SK-N-SH (cell line): ENCODE measurements at regions of chr20 and their contacts with region 1.

Region 1: DNA sequence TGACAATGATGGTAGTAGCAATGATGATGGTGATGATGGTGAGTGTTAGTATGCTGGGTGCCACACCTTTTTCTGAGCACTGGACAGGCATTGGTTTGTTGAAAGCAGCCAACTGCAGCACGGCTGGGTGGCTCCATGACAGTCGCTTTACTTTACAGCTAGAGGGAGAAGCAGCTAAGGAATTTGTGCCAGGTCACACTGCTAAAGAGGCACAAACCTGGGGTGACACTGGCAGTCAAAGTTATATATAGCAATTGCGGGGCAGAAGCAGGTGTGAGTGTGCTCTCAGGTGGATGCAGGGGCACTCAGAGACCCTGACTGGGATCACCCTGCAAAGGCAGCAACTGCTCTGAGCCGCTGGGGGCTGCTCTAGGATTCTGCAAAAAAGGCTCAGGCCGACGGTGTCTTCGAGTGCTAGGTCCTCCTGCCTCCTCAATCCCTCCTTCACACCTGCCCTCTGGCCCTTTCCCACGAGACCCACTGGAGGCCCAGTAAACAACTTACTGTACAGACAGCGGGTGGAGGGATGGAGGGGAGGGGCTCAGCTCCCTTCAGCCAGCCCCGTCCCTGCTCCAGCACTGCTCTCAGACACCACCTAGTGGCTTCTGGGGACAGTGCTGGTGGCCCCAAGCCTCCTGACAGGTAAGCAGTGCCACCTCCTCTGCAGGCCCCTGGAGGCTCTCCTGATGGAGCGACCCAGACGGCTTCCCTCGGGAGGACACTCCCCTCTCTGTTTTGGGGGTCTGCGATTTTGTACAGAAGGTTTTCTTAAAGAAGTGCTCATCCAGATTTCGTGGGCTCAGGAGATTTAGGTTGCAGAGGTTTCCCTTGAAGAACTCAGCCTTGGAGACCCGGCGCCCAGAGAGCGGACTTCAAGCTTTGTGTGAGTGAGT is 4.4 kb upstream of the RPS21 start:
- DNase-seq: peak; percentile 90
- H3K4me3 ChIP-seq: no peak overlapping the region; a peak in 1 of 4 replicates
- H3K27ac ChIP-seq: no peak overlapping the region
- H3K4me1 ChIP-seq: peaks cover 7 to 9% of the 10 kb centered on the region in 2 experiments; a peak in 2 of 4 replicates
- H3K27me3 ChIP-seq: no peaks in the 10 kb centered on the region
- CTCF ChIP-seq: peak; percentile 86
- EP300 ChIP-seq: no peak
- RAD21 ChIP-seq: peak; percentile 89

Region 2: GRCh38 chr20:62302341-62303058 is 80.1 kb before region 1 on chr20 and contains the start of gene ADRM1:
- CTCF ChIA-PET with region 1: interaction called, 28 read pairs
- POLR2A ChIA-PET with region 1: interaction called, 5 read pairs
- DNase-seq: peak; percentile 99
- H3K4me3 ChIP-seq: peak within 1 kb of the TSS; percentile 96 to 97
- H3K27ac ChIP-seq: peak within 1 kb of the TSS; percentile 80 to 94
- H3K4me1 ChIP-seq: peaks cover 7 to 26% of the 10 kb centered on the region in 2 experiments; a peak in 2 of 4 replicates
- H3K27me3 ChIP-seq: no peaks in the 10 kb centered on the region
- CTCF ChIP-seq: peak; percentile 82
- EP300 ChIP-seq: peak in 1 of 2 experiments; percentile 66; a peak in 1 of 4 replicates
- RAD21 ChIP-seq: peak; percentile 43
- polyA plus RNA-seq, gene ADRM1: 137 and 142 TPM in 2 replicates

Region 3: DNA sequence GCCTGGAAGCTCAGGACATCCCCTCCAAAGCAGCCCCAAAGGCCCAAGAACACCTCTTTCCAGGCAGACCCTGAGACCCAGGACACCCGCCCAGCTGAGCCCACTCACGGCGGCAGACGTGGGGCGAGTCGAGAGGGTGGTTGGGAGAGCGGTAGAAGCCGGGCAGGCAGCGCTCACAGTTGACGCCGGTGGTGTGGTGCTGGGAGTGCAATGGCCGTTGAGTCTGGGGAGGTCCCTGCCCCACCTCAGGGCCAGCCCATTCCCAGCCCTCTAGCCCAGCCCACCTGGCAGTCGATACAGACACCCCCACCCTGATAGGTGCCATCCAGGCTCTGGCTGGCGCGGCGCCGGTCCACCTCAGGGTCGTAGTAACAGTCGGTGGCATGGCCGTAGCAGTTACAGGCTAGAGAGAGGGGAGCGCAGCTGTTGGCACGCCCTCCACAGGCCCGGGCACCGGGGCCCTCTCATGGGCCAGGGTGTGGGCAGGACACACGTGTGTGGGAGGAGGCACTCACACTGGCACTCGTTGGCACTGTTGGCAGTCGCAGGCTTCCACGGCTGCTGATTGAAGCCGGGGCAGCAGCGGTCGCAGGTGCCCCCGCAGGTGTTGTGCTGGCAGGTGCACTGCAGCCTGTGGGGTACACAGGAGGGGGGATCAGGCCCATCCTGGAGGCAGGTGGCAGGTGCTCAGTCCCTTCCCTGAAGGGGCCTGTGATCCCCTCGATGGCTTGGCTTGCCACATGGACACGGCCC is 36.0 kb before region 1 on chr20:
- CTCF ChIA-PET with region 1: interaction called, 22 read pairs
- POLR2A ChIA-PET with region 1: no interaction called
- DNase-seq: no peak
- H3K4me3 ChIP-seq: no peak overlapping the region
- H3K27ac ChIP-seq: no peak overlapping the region; a peak in 1 of 4 replicates
- H3K4me1 ChIP-seq: no peaks in the 10 kb centered on the region
- H3K27me3 ChIP-seq: no peaks in the 10 kb centered on the region
- CTCF ChIP-seq: no peak
- EP300 ChIP-seq: no peak
- RAD21 ChIP-seq: no peak

Region 4: GRCh38 chr20:62357187-62357667 is 25.3 kb before region 1 on chr20:
- CTCF ChIA-PET with region 1: interaction called, 127 read pairs
- POLR2A ChIA-PET with region 1: interaction called, 3 read pairs
- DNase-seq: peak; percentile 66
- H3K4me3 ChIP-seq: no peak overlapping the region
- H3K27ac ChIP-seq: peak overlapping the region in 1 of 2 experiments; percentile 92; a peak in 2 of 4 replicates
- H3K4me1 ChIP-seq: peaks cover 29 to 89% of the 10 kb centered on the region in 2 experiments; a peak in 3 of 4 replicates
- H3K27me3 ChIP-seq: no peaks in the 10 kb centered on the region
- CTCF ChIP-seq: no peak
- EP300 ChIP-seq: no peak
- RAD21 ChIP-seq: no peak

Region 5: DNA sequence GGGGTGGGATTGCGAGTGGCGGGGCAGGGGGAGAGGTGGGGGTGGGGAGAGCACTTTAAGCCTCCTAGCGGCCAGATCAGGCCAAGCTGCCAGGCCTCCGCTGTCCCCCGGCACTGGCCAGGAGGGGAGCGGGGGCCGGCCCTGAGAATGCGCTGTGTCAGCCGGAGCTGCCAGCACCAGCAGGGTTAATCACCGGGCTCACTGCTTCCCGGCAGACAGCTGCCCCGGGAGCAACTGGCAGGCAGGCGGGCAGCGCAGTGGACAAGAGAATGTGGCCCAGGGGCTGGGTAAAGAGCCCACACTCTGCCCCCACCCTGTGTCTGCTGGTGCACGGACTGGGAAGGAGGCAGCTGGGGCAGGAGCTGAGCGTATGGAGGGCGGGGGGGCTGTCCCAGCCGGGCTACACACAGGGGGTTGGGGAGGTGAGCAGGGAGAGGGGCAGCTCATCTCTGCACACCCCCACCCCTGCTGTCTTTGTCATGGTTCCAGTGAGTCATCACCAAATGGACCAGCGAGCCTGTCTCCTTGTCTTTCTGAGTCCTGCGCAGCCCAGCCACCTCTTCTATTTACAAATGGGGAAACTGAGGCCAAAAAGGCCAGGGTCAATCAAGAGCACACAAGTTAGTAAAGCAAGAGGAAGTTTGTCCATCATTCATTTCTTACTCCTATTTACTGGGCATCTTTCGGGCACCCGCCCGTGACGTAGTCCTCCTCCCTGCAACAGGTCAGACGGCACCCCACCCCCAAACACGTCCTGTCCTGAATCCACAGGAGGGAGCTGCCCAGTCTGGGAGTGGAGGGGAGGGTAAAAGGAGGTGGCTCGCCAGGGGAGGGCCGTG is 13.4 kb before region 1 on chr20:
- CTCF ChIA-PET with region 1: interaction called, 127 read pairs
- POLR2A ChIA-PET with region 1: interaction called, 9 read pairs
- DNase-seq: peak; percentile 89
- H3K4me3 ChIP-seq: peak overlapping the region in 1 of 2 experiments; percentile 35; a peak in 2 of 4 replicates
- H3K27ac ChIP-seq: peak overlapping the region in 1 of 2 experiments; percentile 93; a peak in 2 of 4 replicates
- H3K4me1 ChIP-seq: peaks cover 33 to 77% of the 10 kb centered on the region in 2 experiments; a peak in 3 of 4 replicates
- H3K27me3 ChIP-seq: no peaks in the 10 kb centered on the region
- CTCF ChIP-seq: peak; percentile 49
- EP300 ChIP-seq: peak in 1 of 2 experiments; percentile 16; a peak in 1 of 4 replicates
- RAD21 ChIP-seq: no peak